GM13977 (cell line): ENCODE measurements at regions of chr4 and their contacts with region 1.

Region 1: GRCh38 chr4:64158648-64159326 is 250.5 kb downstream of the TECRL start:
- DNase-seq: peak; percentile 40
- CTCF ChIP-seq: peak; percentile 88

Region 2: DNA sequence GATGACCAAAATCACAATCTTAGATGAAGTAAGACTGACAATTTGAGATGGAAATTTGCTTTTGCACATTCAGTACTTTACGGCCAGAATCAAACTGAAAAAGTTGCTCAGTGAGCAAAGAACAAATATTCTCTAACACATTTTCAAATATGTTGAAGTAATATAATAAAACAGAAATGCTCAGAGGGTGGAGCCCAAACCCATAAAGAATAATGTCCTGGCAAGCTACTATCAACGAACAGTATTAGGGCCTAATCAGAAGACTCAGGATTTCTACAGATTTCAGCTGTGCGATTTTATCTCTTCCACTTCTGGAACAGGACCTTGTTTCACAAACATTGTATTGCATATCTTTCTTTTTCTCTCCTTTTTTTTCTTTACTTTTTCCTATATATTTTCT is 254.6 kb before region 1 on chr4:
- in situ Hi-C with region 1: no loop called
- DNase-seq: no peak
- CTCF ChIP-seq: no peak

Region 3: DNA sequence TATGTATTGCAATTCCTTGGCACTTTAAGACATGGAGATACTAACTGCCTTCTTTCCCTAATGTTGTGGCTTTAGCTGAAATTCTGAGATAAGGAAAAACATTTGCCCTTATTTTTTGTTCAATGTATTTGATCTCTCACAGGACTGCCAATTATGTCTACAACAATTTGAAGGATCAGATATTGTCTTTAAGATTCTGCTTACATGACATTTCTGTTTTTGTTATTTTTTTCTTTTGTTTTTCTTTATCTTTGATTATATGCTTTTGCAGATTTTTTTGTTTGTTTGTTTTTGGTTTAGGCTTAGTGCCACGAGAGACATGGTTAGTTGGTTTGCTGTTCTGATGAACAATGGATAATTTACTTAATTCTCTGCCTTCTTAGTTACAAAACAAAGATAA is 52.9 kb before region 1 on chr4:
- in situ Hi-C with region 1: no loop called
- DNase-seq: no peak
- CTCF ChIP-seq: no peak

Region 4: DNA sequence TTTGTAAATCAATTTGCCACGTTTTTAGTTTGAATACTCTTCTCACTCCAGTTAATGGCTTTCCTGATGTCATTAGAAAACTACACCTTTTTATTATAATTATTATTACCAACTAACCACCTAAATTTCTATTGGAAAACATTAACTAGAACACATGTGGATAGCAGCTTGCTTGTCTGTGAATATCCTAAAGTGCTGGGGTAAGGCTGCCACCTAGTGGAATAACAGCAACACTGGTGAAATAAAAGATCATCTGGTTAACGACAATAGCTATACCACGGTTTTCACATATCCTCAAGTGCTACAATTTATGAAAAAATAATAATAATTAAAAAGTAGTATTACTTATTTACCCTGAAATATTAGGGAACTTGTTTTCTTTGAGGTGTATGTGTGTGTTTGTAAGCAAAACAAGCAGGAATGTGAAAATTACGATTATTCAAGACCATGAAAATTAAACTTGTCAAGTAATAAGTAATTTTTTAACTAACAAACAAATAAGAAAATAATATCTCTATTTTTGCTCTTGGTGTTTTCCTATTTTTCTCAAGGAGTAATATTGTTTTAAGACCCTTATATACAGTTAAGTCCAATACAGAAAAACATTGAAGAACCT is 380.6 kb after region 1 on chr4:
- in situ Hi-C with region 1: loop called (anchors 25 kb)
- DNase-seq: peak; percentile 53
- CTCF ChIP-seq: peak; percentile 77